ENCODE measurements at regions of chr2 and their contacts with region 1.

Region 1: GRCh38 chr2:146119586-146119985 is 1599.7 kb upstream of the ZEB2 start:
- DNase-seq: no peak
- H3K4me3 Mint-ChIP-seq: no peak overlapping the region
- H3K27ac Mint-ChIP-seq: no peak overlapping the region
- H3K4me1 Mint-ChIP-seq: no peaks in the 10 kb centered on the region
- H3K27me3 Mint-ChIP-seq: no peaks in the 10 kb centered on the region

Region 2: DNA sequence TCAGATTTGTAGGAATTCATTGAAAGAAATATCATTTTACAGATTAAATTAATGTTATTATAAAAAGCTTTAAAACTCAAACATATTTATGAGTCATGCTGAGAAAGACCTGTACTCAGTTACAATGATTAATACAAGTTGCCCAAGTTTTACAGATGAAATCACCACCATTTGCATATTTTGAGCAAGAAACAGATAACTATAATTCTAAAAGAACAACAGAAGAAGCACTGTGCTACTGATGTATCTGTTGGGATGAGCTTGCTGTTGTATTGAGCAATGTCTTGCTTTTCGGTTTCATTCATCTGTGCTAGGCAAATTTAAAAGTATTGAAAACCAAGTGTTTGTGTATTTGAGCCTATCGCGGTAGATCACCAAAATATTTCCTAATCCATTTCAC is 10.6 kb before region 1 on chr2:
- intact Hi-C with region 1: loop called (anchors 1 kb)
- DNase-seq: no peak
- H3K4me3 Mint-ChIP-seq: no peak overlapping the region
- H3K27ac Mint-ChIP-seq: no peak overlapping the region
- H3K4me1 Mint-ChIP-seq: no peaks in the 10 kb centered on the region
- H3K27me3 Mint-ChIP-seq: no peaks in the 10 kb centered on the region

Region 3: DNA sequence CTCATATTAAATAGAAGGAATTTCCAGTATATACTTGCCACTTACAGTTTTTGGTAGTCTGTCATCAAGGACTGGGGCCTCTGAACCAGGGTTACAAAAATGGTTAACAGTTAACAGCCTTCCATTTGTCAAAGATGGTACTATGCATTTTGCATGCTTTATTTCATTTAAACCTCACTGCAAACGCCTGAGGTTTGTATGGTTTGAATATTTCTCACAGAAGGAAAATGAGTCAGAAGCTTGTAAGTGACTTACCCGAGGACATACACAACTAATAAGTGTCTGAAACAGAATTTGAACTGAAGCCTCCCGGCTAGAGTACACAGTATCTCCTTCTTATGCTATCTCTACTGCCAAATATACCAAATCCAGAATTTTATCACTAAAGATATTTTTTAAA is 131.7 kb after region 1 on chr2:
- intact Hi-C with region 1: no loop called
- DNase-seq: no peak
- H3K4me3 Mint-ChIP-seq: no peak overlapping the region
- H3K27ac Mint-ChIP-seq: no peak overlapping the region
- H3K4me1 Mint-ChIP-seq: no peaks in the 10 kb centered on the region
- H3K27me3 Mint-ChIP-seq: no peaks in the 10 kb centered on the region

Measured in activated CD4-positive, alpha-beta T cell treated with anti-CD3 and anti-CD28 coated beads, Interleukin-2, amount 10 ng/mL, durations not matched to agents 24 days and 14 days (primary cell).